Activated naive CD4-positive, alpha-beta T cell treated with anti-CD3 and anti-CD28 coated beads for 36 hours (primary cell): ENCODE measurements at regions of chr13 and their contacts with region 1.

Region 1: DNA sequence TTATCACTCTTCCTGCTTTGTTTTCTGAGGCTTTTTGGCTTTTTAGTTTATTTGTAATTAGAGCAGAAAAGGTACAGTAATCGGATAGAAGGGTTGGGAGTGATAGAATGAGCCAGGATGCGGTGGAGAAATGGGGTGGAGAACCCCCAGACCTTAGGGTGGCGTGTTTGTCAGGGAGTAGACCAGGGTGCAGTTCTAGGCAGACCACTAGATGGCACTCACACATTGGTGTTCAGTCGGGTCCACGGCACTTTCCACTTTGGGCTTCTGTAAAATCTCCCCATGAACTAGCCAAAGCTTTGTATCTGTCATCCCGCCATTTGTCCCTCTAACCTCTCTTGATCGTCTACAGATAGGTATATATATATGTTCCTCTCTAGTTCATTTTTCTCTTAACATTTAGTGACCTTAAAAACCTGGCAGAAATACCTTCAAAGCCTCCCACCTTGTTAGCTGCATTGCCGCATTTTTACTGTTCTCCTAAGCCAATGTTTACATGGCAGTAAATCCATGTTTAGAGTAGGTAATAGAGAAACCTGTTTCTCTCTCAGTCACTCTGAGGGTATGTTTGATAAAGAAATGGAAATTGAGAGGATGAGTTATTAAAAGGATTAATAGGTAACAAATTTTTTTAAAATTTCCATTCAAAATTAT is 154.9 kb downstream of the TM9SF2 start:
- DNase-seq: peak; percentile 93
- H3K4me3 Mint-ChIP-seq: peak overlapping the region; percentile 39
- H3K27ac Mint-ChIP-seq: no peak overlapping the region
- H3K4me1 Mint-ChIP-seq: peaks cover 42% of the 10 kb centered on the region
- H3K27me3 Mint-ChIP-seq: no peaks in the 10 kb centered on the region

Region 2: GRCh38 chr13:99821741-99822140 is 165.5 kb after region 1 on chr13:
- CTCF ChIA-PET with region 1: interaction called, 7 read pairs
- intact Hi-C with region 1: loop called (anchors 2 kb)
- DNase-seq: no peak
- H3K4me3 Mint-ChIP-seq: no peak overlapping the region
- H3K27ac Mint-ChIP-seq: no peak overlapping the region
- H3K4me1 Mint-ChIP-seq: peaks cover 16% of the 10 kb centered on the region
- H3K27me3 Mint-ChIP-seq: no peaks in the 10 kb centered on the region

Region 3: GRCh38 chr13:99916366-99917103 is 260.3 kb after region 1 on chr13:
- CTCF ChIA-PET with region 1: interaction called, 7 read pairs
- intact Hi-C with region 1: loop called (anchors 1 kb)
- DNase-seq: peak; percentile 40
- H3K4me3 Mint-ChIP-seq: no peak overlapping the region
- H3K27ac Mint-ChIP-seq: no peak overlapping the region
- H3K4me1 Mint-ChIP-seq: peaks cover 7% of the 10 kb centered on the region
- H3K27me3 Mint-ChIP-seq: peaks cover 9% of the 10 kb centered on the region

Region 4: GRCh38 chr13:100392709-100393641 is 736.8 kb after region 1 on chr13:
- CTCF ChIA-PET with region 1: no interaction called
- intact Hi-C with region 1: loop called (anchors 5 kb)
- DNase-seq: peak; percentile 88
- H3K4me3 Mint-ChIP-seq: no peak overlapping the region
- H3K27ac Mint-ChIP-seq: no peak overlapping the region
- H3K4me1 Mint-ChIP-seq: peaks cover 24% of the 10 kb centered on the region
- H3K27me3 Mint-ChIP-seq: no peaks in the 10 kb centered on the region

Region 5: DNA sequence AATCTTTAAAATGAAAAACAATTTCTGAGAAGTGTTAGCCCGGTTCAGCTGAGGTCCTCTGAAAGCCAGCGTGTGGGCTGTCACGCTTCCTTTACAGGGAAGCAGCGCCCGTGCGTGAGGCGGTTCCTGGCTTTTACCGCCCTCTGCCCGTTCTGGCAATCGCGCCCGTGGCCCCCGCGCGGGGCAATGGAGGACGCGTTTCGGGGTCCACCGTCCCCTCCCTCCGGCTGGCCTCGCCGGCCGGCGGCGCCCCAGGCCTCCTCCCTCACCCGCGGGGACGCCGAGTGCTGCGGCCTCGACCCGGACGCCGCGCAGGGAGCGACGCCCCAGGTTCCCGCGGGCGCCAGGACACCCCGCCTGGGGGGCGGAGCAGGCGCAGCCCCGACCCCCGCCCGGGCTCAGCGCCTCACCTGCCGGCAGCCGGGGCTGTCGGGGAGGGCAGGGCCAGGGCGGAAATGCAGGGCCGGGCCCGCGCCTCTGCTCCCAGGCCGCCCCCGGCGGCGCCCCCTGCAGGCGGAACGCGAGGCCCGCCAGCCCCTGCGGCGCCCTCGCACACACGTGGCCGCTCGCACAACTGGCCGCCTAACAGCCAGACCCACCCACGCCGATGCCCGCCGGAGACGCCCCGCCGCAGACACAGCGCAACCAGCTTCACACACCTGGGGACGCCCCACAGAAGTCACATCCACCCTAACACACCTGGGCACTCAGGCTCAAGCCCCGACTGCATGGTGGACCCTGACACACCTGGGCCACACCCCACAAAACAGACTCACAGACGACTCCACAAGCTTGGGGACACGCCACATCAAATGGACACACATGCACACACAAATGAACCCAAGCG is 932.3 kb after region 1 on chr13 and contains the start of gene GGACT:
- CTCF ChIA-PET with region 1: no interaction called
- intact Hi-C with region 1: loop called (anchors 2 kb)
- DNase-seq: peak; percentile 84
- H3K4me3 Mint-ChIP-seq: peak within 1 kb of the TSS; percentile 75
- H3K27ac Mint-ChIP-seq: peak within 1 kb of the TSS; percentile 87
- H3K4me1 Mint-ChIP-seq: peaks cover 39% of the 10 kb centered on the region
- H3K27me3 Mint-ChIP-seq: no peaks in the 10 kb centered on the region
- total RNA-seq, gene GGACT: 3.9 to 6.6 TPM